ENCODE measurements at regions of chr11 and their contacts with region 1.

Region 1: DNA sequence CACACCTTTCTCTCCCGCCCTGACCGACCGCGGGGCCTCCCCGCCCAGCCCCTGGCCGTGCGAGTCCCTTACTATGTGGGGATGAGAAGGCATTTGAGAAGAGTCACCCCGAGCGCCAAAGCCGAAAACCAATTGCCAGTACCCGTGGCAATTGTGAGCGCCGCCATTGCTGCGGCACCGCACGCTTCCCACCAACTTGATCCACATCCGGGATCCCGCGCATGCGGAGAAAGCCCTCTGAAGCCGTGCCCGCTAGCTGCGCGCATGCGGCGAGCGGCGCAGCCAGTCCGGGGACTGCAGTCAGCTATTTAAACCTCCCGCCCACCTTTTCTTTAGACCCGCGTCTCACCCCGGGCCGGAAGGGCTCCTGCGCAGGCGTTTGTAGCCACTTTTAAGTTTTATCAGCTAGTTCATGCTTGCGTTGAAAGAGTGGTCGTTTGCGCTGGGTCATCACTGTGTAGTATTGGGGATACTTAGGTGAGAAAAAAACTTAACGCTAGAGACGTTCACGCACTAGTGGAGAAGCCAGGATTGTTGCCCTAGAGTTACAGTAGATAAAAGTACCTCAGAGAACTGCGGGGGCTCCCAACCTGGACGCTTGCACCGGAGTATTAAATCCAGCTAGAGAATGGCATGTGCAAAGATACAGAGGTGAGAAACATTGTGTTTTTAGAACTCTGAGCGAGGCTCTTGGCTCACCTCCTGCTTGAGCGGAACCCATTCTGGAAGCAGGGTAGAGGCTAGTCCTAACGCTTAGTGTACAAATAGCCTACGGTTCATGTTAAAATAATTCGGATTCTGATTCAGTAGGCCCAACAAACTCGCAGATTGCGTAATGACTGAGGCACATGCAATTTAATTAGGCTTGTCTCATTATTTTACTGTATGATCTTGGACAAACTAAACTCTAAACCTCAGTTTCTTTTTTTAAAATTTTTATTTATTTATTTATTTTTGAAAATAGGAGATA is at the start of gene ALG8:
- DNase-seq: peak; percentile 96
- ATAC-seq: peak; percentile 95
- H3K4me3 ChIP-seq: peak within 1 kb of the TSS; percentile 77 to 97 (median 85)
- H3K4me3 Mint-ChIP-seq: peak within 1 kb of the TSS; percentile 99
- H3K27ac ChIP-seq: peak within 1 kb of the TSS; percentile 63 to 86
- H3K27ac Mint-ChIP-seq: peak within 1 kb of the TSS; percentile 97
- H3K4me1 ChIP-seq: peaks cover 25 to 36% of the 10 kb centered on the region in 2 donors
- H3K4me1 Mint-ChIP-seq: peaks cover 44% of the 10 kb centered on the region
- H3K27me3 ChIP-seq: no peaks in the 10 kb centered on the region
- H3K27me3 Mint-ChIP-seq: no peaks in the 10 kb centered on the region
- CTCF ChIP-seq: no peak
- total RNA-seq, gene ALG8: 28.5 and 35.3 TPM in 2 replicates

Region 2: GRCh38 chr11:76444384-76445123 is 1695.2 kb before region 1 on chr11 and contains the start of gene EMSY:
- CTCF ChIA-PET with region 1: no interaction called
- POLR2A ChIA-PET with region 1: no interaction called
- intact Hi-C with region 1: loop called (anchors 10 kb)
- DNase-seq: peak; percentile 96
- ATAC-seq: peak; percentile 97
- H3K4me3 ChIP-seq: peak within 1 kb of the TSS; percentile 87 to 99 (median 97)
- H3K4me3 Mint-ChIP-seq: peak within 1 kb of the TSS; percentile 96
- H3K27ac ChIP-seq: peak within 1 kb of the TSS; percentile 80 to 86
- H3K27ac Mint-ChIP-seq: peak within 1 kb of the TSS; percentile 98
- H3K4me1 ChIP-seq: peaks cover 19 to 23% of the 10 kb centered on the region in 2 donors
- H3K4me1 Mint-ChIP-seq: peaks cover 35% of the 10 kb centered on the region
- H3K27me3 ChIP-seq: no peaks in the 10 kb centered on the region
- H3K27me3 Mint-ChIP-seq: no peaks in the 10 kb centered on the region
- CTCF ChIP-seq: no peak
- total RNA-seq, gene EMSY: 54.0 and 59.7 TPM in 2 replicates

Region 3: DNA sequence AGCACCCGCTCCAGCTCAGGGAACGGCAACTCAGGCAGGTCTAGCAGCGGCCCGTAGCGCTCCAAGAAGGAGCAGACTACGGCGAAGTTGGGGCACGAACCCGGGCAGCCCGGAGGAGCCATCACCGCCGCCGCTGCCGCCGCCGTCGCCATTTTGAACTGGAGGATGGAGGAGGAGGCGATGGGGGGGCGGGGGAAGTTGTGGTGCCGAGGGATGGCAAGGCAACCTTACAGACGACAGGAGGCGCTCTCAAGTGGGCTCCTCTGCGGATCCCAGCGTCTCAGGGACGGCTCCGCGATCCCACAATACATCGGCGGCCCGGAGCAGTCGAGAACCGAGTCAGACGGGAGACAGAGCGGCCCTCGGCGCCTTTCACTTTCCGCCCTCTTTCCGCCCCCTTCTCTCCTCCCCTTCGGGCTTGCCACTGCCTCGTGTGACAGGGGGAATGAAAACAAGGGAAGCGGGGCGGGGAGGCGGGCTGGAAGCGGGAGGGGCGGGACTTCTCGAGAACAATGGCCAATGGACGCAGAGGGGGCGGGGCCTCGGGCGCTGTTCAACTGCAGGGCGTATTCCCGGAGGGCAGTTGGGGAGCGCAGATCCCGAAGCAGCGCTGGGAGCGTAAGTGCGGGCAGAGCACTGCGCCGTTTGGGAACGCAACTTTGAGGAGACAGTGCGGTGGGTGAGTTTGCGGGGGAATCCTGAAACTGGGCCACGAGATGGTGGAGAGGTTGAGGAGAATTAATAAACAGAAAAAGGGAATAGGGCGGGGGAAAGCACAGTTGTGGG is 319.0 kb before region 1 on chr11 and contains the starts of genes AAMDC and RSF1:
- CTCF ChIA-PET with region 1: no interaction called
- POLR2A ChIA-PET with region 1: no interaction called
- intact Hi-C with region 1: loop called (anchors 5 kb)
- DNase-seq: peak; percentile 98
- ATAC-seq: peak; percentile 83
- H3K4me3 ChIP-seq: peak within 1 kb of the TSS; percentile 77 to 98 (median 94)
- H3K4me3 Mint-ChIP-seq: peak within 1 kb of the TSS; percentile 100
- H3K27ac ChIP-seq: peak within 1 kb of the TSS; percentile 81 to 83
- H3K27ac Mint-ChIP-seq: peak within 1 kb of the TSS; percentile 95
- H3K4me1 ChIP-seq: peaks cover 14 to 26% of the 10 kb centered on the region in 2 donors
- H3K4me1 Mint-ChIP-seq: peaks cover 36% of the 10 kb centered on the region
- H3K27me3 ChIP-seq: no peaks in the 10 kb centered on the region
- H3K27me3 Mint-ChIP-seq: no peaks in the 10 kb centered on the region
- CTCF ChIP-seq: peak; percentile 73
- total RNA-seq, gene AAMDC: 4.6 and 7.5 TPM in 2 replicates
- total RNA-seq, gene RSF1: 100 and 104 TPM in 2 replicates

Region 4: DNA sequence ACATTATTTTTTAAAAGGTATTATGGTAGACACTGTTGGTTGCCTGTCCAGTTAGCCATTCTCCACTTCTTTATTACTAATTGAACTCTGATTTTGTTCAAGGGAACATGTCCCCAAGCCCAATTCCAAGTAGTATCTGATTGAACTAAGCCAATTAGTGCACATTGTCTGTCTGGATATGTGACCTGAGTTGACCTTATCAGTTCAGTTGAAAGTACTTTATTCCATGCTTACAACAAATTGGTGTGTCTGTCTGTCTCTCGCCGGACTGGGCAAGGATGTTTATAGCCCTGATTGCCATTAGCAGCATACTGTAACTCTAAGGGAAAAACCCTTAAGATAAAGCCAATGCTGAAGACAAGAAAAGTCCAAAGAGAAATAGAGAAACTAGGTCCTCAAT is 230.9 kb before region 1 on chr11:
- CTCF ChIA-PET with region 1: no interaction called
- POLR2A ChIA-PET with region 1: no interaction called
- intact Hi-C with region 1: no loop called
- DNase-seq: no peak
- ATAC-seq: no peak
- H3K4me3 ChIP-seq: no peak overlapping the region
- H3K4me3 Mint-ChIP-seq: no peak overlapping the region
- H3K27ac ChIP-seq: no peak overlapping the region
- H3K27ac Mint-ChIP-seq: no peak overlapping the region
- H3K4me1 ChIP-seq: no peaks in the 10 kb centered on the region
- H3K4me1 Mint-ChIP-seq: no peaks in the 10 kb centered on the region
- H3K27me3 ChIP-seq: no peaks in the 10 kb centered on the region
- H3K27me3 Mint-ChIP-seq: no peaks in the 10 kb centered on the region
- CTCF ChIP-seq: no peak

Region 5: GRCh38 chr11:78079232-78080083 is 60.2 kb before region 1 on chr11 and contains the start of gene NDUFC2:
- CTCF ChIA-PET with region 1: no interaction called
- POLR2A ChIA-PET with region 1: interaction called, 4 read pairs
- intact Hi-C with region 1: loop called (anchors 1 kb)
- DNase-seq: peak; percentile 76
- ATAC-seq: peak; percentile 86
- H3K4me3 ChIP-seq: peak within 1 kb of the TSS; percentile 89 to 96 (median 92)
- H3K4me3 Mint-ChIP-seq: peak within 1 kb of the TSS; percentile 93
- H3K27ac ChIP-seq: peak within 1 kb of the TSS; percentile 31 to 63
- H3K27ac Mint-ChIP-seq: peak within 1 kb of the TSS; percentile 86
- H3K4me1 ChIP-seq: peaks cover 18 to 35% of the 10 kb centered on the region in 2 donors
- H3K4me1 Mint-ChIP-seq: peaks cover 48% of the 10 kb centered on the region
- H3K27me3 ChIP-seq: no peaks in the 10 kb centered on the region
- H3K27me3 Mint-ChIP-seq: no peaks in the 10 kb centered on the region
- CTCF ChIP-seq: no peak
- total RNA-seq, gene NDUFC2: 39.4 and 49.0 TPM in 2 replicates

Region 6: GRCh38 chr11:78150346-78151136 is 10.8 kb after region 1 on chr11:
- CTCF ChIA-PET with region 1: no interaction called
- POLR2A ChIA-PET with region 1: no interaction called
- intact Hi-C with region 1: no loop called
- DNase-seq: no peak
- ATAC-seq: no peak
- H3K4me3 ChIP-seq: no peak overlapping the region
- H3K4me3 Mint-ChIP-seq: no peak overlapping the region
- H3K27ac ChIP-seq: no peak overlapping the region
- H3K27ac Mint-ChIP-seq: no peak overlapping the region
- H3K4me1 ChIP-seq: no peaks in the 10 kb centered on the region
- H3K4me1 Mint-ChIP-seq: peaks cover 2% of the 10 kb centered on the region
- H3K27me3 ChIP-seq: no peaks in the 10 kb centered on the region
- H3K27me3 Mint-ChIP-seq: no peaks in the 10 kb centered on the region
- CTCF ChIP-seq: no peak

Region 7: DNA sequence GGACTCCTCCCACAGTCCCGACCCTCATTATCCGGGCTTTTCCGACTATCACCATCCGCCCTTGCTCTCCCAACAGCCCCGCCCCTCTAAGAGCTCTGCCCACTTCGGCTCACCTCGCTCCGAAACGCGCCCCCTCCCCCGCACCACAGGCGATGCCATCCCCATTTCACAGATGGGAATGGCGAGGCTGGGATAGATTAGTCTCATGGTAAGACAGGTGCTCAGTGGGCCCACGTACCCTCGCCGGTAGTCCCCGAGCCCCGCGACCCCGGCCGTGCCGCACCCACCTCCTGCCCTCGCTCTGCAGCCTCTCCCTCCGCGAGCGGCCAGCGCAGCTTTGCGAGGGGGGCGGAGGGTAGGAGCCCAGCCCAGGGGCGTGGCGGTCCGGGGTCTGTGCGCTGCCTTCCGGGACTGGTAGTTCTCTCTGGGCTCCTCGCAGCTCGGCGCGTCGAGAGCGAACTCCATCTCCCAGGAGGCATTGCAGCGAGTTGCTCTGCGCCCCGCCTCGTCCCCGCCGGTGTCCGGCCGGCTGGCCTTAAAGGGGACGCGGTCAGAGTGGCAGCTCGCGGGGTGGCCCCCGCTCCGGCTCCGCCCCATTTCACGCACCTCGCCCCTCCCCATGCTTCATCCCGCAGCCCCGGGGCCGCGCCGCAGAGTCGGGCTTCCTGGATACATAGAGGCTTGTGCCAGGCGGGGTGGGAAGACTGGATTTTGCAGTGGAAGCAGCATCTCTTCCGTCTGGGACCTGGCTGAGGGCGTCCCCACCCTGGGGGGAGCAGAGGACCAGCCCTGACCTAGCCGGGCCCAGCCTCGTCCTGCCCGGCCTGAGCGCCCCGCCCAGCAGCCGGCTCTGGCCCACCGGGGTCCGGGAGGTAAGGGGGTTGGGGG is 48.8 kb after region 1 on chr11 and contains the starts of genes KCTD21 and USP35:
- CTCF ChIA-PET with region 1: interaction called, 9 read pairs
- POLR2A ChIA-PET with region 1: interaction called, 11 read pairs
- intact Hi-C with region 1: loop called (anchors 1 kb)
- DNase-seq: peak; percentile 93
- ATAC-seq: peak; percentile 93
- H3K4me3 ChIP-seq: peak within 1 kb of the TSS; percentile 67 to 96 (median 90)
- H3K4me3 Mint-ChIP-seq: peak within 1 kb of the TSS; percentile 100
- H3K27ac ChIP-seq: peak within 1 kb of the TSS; percentile 55 to 77
- H3K27ac Mint-ChIP-seq: peak within 1 kb of the TSS; percentile 93
- H3K4me1 ChIP-seq: peaks cover 24 to 28% of the 10 kb centered on the region in 2 donors
- H3K4me1 Mint-ChIP-seq: peaks cover 45% of the 10 kb centered on the region
- H3K27me3 ChIP-seq: no peaks in the 10 kb centered on the region
- H3K27me3 Mint-ChIP-seq: no peaks in the 10 kb centered on the region
- CTCF ChIP-seq: no peak
- total RNA-seq, gene KCTD21: 6.3 and 8.0 TPM in 2 replicates
- total RNA-seq, gene USP35: 4.5 and 6.0 TPM in 2 replicates